CD8-positive, alpha-beta T cell (primary cell): ENCODE measurements at regions of chr14 and their contacts with region 1.

Region 1: GRCh38 chr14:75230140-75231045 is 48.2 kb upstream of the FOS start:
- DNase-seq: peak; percentile 25 to 93 (median 56)
- ATAC-seq: peak; percentile 75
- H3K4me3 ChIP-seq: no peak overlapping the region
- H3K4me3 Mint-ChIP-seq: peak overlapping the region; percentile 24
- H3K27ac ChIP-seq: peak overlapping the region in 1 of 2 experiments; percentile 55
- H3K27ac Mint-ChIP-seq: peak overlapping the region; percentile 81
- H3K4me1 ChIP-seq: peaks cover 41% of the 10 kb centered on the region
- H3K4me1 Mint-ChIP-seq: peaks cover 51% of the 10 kb centered on the region
- H3K27me3 ChIP-seq: no peaks in the 10 kb centered on the region
- H3K27me3 Mint-ChIP-seq: no peaks in the 10 kb centered on the region
- CTCF ChIP-seq: peak; percentile 35

Region 2: DNA sequence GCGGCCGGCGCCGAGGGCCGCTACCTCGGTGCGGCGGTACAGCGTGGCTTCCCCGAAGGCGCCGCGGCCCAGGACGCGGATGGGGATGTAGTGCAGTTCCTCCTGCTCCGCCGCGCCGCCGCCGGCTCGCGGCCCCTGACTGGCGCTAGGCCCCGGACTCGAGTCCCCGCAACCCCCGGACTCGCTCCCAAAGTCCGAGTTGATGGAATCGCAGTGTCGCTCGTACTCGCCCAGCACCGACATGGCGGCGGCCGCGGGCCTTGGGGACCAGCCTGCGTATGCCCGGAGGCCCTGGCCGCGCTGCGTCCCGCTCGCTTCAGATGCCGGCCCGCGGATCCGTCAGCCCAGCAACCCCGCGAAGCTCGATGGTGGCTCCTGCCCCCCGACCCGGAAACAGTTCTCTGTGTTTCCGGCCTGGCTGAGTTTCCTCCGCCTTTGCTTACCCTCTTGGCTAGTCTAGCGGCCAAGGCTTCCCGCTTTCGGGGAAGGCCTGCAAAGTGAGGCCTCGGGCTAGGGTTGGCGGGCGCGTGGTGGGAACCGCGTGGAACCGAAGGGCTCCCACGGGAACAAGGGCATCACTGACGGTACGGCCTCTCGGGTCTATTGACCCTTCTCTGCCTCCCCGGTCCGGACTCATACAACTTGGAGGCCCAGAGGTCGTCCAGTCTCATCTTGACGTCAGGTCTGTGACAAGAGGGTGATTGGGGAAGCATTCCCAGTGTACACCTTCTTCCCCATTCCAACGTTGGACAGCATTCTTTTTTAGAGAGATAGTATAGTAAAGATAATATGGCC is 103.5 kb before region 1 on chr14 and contains the start of gene NEK9:
- CTCF ChIA-PET with region 1: no interaction called
- POLR2A ChIA-PET with region 1: no interaction called
- intact Hi-C with region 1: loop called (anchors 5 kb)
- DNase-seq: peak; percentile 77 to 93 (median 89)
- ATAC-seq: peak; percentile 82
- H3K4me3 ChIP-seq: peak within 1 kb of the TSS; percentile 87 to 95
- H3K4me3 Mint-ChIP-seq: peak within 1 kb of the TSS; percentile 95
- H3K27ac ChIP-seq: peak within 1 kb of the TSS; percentile 87 to 92
- H3K27ac Mint-ChIP-seq: peak within 1 kb of the TSS; percentile 98
- H3K4me1 ChIP-seq: peaks cover 23% of the 10 kb centered on the region
- H3K4me1 Mint-ChIP-seq: peaks cover 46% of the 10 kb centered on the region
- H3K27me3 ChIP-seq: no peaks in the 10 kb centered on the region
- H3K27me3 Mint-ChIP-seq: no peaks in the 10 kb centered on the region
- CTCF ChIP-seq: no peak
- total RNA-seq, gene NEK9: 40.7 to 42.9 TPM

Region 3: GRCh38 chr14:75132382-75133086 is 97.9 kb before region 1 on chr14:
- CTCF ChIA-PET with region 1: interaction called, 4 read pairs
- POLR2A ChIA-PET with region 1: no interaction called
- intact Hi-C with region 1: loop called (anchors 5 kb)
- DNase-seq: peak in 6 of 9 experiments; percentile 28 to 86 (median 54)
- ATAC-seq: peak; percentile 91
- H3K4me3 ChIP-seq: no peak overlapping the region
- H3K4me3 Mint-ChIP-seq: no peak overlapping the region
- H3K27ac ChIP-seq: no peak overlapping the region
- H3K27ac Mint-ChIP-seq: peak overlapping the region; percentile 12
- H3K4me1 ChIP-seq: peaks cover 3% of the 10 kb centered on the region
- H3K4me1 Mint-ChIP-seq: peaks cover 18% of the 10 kb centered on the region
- H3K27me3 ChIP-seq: no peaks in the 10 kb centered on the region
- H3K27me3 Mint-ChIP-seq: no peaks in the 10 kb centered on the region
- CTCF ChIP-seq: peak; percentile 79

Region 4: GRCh38 chr14:75242546-75243273 is 12.3 kb after region 1 on chr14:
- CTCF ChIA-PET with region 1: interaction called, 12 read pairs
- POLR2A ChIA-PET with region 1: interaction called, 6 read pairs
- intact Hi-C with region 1: loop called in 1 of 2 experiments (anchors 2 kb)
- DNase-seq: no peak
- ATAC-seq: no peak
- H3K4me3 ChIP-seq: no peak overlapping the region
- H3K4me3 Mint-ChIP-seq: no peak overlapping the region
- H3K27ac ChIP-seq: no peak overlapping the region
- H3K27ac Mint-ChIP-seq: no peak overlapping the region
- H3K4me1 ChIP-seq: peaks cover 18% of the 10 kb centered on the region
- H3K4me1 Mint-ChIP-seq: peaks cover 19% of the 10 kb centered on the region
- H3K27me3 ChIP-seq: no peaks in the 10 kb centered on the region
- H3K27me3 Mint-ChIP-seq: no peaks in the 10 kb centered on the region
- CTCF ChIP-seq: no peak

Region 5: DNA sequence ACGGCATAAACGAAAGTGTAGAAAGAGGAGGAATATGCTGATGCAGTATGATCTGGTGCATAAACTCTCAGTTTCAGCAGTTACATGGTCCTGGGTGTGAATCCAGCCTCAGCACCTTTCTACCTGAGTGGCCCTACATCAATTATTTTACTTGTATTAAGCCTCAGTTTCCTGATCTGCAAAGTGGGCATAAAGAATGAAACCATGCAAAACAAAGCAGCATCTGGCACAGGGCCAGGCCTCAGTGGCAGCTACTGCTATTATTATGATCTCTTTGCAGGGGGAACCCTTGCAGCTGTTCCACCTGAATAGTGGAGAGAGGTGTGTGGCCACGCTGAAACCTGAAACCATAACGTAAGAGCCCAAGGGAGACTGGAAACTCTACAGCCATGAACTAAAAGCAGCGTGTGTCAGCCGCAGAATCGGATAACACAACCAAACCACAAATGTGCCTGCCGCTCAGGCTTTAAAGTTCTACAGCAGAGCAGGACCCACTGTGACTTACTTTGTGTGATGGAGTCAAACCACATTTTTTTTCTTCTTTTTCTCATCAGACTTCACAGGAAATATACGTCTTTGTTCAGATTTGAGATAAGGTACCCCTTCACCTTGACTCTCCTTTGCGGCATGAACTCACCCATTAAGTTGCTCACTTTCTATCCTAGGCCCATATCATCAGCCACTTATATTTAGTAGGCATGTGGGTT is 19.0 kb after region 1 on chr14:
- CTCF ChIA-PET with region 1: interaction called, 12 read pairs
- POLR2A ChIA-PET with region 1: interaction called, 6 read pairs
- intact Hi-C with region 1: loop called (anchors 1 to 2 kb)
- DNase-seq: peak; percentile 68 to 97 (median 81)
- ATAC-seq: peak; percentile 74
- H3K4me3 ChIP-seq: peak overlapping the region; percentile 9 to 24
- H3K4me3 Mint-ChIP-seq: peak overlapping the region; percentile 13
- H3K27ac ChIP-seq: peak overlapping the region; percentile 84 to 90
- H3K27ac Mint-ChIP-seq: peak overlapping the region; percentile 88
- H3K4me1 ChIP-seq: peaks cover 62% of the 10 kb centered on the region
- H3K4me1 Mint-ChIP-seq: peaks cover 58% of the 10 kb centered on the region
- H3K27me3 ChIP-seq: no peaks in the 10 kb centered on the region
- H3K27me3 Mint-ChIP-seq: no peaks in the 10 kb centered on the region
- CTCF ChIP-seq: no peak

Region 6: DNA sequence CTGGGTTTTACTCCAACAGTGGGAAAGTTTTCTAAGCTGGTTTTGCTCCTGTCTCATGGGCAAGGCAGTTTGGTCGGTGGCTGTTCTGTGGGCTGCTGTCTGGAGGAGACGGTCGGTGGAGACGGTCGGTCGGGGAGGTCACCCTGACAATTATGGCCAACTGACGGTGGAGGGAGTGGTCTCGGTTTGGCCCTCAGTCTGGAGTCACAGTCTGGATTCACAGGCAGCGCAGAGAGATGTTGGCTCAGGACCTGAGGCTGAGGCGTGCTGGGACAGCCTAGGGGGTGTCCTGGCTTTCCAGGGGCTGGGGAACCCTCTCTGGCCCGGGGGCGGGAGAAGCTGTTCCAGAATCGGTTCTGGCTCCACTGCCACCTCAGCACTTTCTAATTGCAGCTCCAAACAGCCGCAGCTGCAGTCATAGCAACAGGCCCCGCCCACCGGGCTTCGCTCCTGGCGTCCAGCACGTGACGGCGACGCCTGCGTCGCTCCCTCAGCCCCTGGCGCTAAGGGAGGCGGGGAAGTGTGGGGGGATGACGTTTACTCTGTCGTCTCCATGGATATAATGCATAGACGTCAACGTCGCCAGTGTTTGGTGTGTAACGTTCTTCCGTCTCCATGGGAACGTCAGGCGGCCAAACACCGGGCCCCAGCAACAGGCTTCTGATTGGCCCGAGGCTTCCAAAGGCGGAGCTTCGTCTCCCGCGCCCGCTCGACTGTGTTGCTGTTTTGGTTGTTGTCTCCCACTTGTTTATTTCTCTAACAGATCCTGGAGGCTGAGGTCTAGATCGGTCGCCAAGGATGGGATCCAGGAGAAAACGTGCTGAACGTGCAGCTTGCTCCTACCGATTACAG is 28.4 kb after region 1 on chr14:
- CTCF ChIA-PET with region 1: interaction called, 3 read pairs
- POLR2A ChIA-PET with region 1: no interaction called
- intact Hi-C with region 1: loop called (anchors 1 to 2 kb)
- DNase-seq: peak; percentile 97 to 100 (median 100)
- ATAC-seq: peak; percentile 89
- H3K4me3 ChIP-seq: peak overlapping the region; percentile 45 to 54
- H3K4me3 Mint-ChIP-seq: peak overlapping the region; percentile 82
- H3K27ac ChIP-seq: peak overlapping the region; percentile 92 to 98
- H3K27ac Mint-ChIP-seq: peak overlapping the region; percentile 97
- H3K4me1 ChIP-seq: peaks cover 17% of the 10 kb centered on the region
- H3K4me1 Mint-ChIP-seq: peaks cover 29% of the 10 kb centered on the region
- H3K27me3 ChIP-seq: no peaks in the 10 kb centered on the region
- H3K27me3 Mint-ChIP-seq: no peaks in the 10 kb centered on the region
- CTCF ChIP-seq: no peak

Region 7: GRCh38 chr14:75487155-75487671 is 256.8 kb after region 1 on chr14:
- CTCF ChIA-PET with region 1: interaction called, 5 read pairs
- POLR2A ChIA-PET with region 1: no interaction called
- intact Hi-C with region 1: loop called in 1 of 2 experiments (anchors 10 kb)
- DNase-seq: peak in 3 of 9 experiments; percentile 45 to 64 (median 47)
- ATAC-seq: peak; percentile 70
- H3K4me3 ChIP-seq: no peak overlapping the region
- H3K4me3 Mint-ChIP-seq: no peak overlapping the region
- H3K27ac ChIP-seq: no peak overlapping the region
- H3K27ac Mint-ChIP-seq: peak overlapping the region; percentile 15
- H3K4me1 ChIP-seq: peaks cover 4% of the 10 kb centered on the region
- H3K4me1 Mint-ChIP-seq: peaks cover 11% of the 10 kb centered on the region
- H3K27me3 ChIP-seq: no peaks in the 10 kb centered on the region
- H3K27me3 Mint-ChIP-seq: no peaks in the 10 kb centered on the region
- CTCF ChIP-seq: no peak

Region 8: GRCh38 chr14:75822522-75823141 is 592.2 kb after region 1 on chr14:
- CTCF ChIA-PET with region 1: no interaction called
- POLR2A ChIA-PET with region 1: no interaction called
- intact Hi-C with region 1: no loop called
- DNase-seq: no peak
- ATAC-seq: no peak
- H3K4me3 ChIP-seq: no peak overlapping the region
- H3K4me3 Mint-ChIP-seq: no peak overlapping the region
- H3K27ac ChIP-seq: no peak overlapping the region
- H3K27ac Mint-ChIP-seq: no peak overlapping the region
- H3K4me1 ChIP-seq: no peaks in the 10 kb centered on the region
- H3K4me1 Mint-ChIP-seq: no peaks in the 10 kb centered on the region
- H3K27me3 ChIP-seq: no peaks in the 10 kb centered on the region
- H3K27me3 Mint-ChIP-seq: no peaks in the 10 kb centered on the region
- CTCF ChIP-seq: no peak